AG04450 (cell line): ENCODE measurements at regions of chr18 and their contacts with region 1.

Region 1: GRCh38 chr18:25533218-25533617 is 181.3 kb upstream of the ZNF521 start:
- DNase-seq: no peak
- H3K4me3 ChIP-seq: no peak overlapping the region
- H3K27ac ChIP-seq: no peak overlapping the region
- H3K27me3 ChIP-seq: no peaks in the 10 kb centered on the region
- CTCF ChIP-seq: no peak

Region 2: GRCh38 chr18:25262920-25263319 is 270.3 kb before region 1 on chr18:
- CTCF ChIA-PET with region 1: interaction called, 12 read pairs
- POLR2A ChIA-PET with region 1: no interaction called
- DNase-seq: no peak
- H3K4me3 ChIP-seq: no peak overlapping the region
- H3K27ac ChIP-seq: no peak overlapping the region
- H3K27me3 ChIP-seq: no peaks in the 10 kb centered on the region
- CTCF ChIP-seq: no peak

Region 3: GRCh38 chr18:25435149-25435782 is 98.0 kb before region 1 on chr18:
- CTCF ChIA-PET with region 1: no interaction called
- POLR2A ChIA-PET with region 1: no interaction called
- DNase-seq: no peak
- H3K4me3 ChIP-seq: no peak overlapping the region
- H3K27ac ChIP-seq: no peak overlapping the region
- H3K27me3 ChIP-seq: no peaks in the 10 kb centered on the region
- CTCF ChIP-seq: no peak

Region 4: DNA sequence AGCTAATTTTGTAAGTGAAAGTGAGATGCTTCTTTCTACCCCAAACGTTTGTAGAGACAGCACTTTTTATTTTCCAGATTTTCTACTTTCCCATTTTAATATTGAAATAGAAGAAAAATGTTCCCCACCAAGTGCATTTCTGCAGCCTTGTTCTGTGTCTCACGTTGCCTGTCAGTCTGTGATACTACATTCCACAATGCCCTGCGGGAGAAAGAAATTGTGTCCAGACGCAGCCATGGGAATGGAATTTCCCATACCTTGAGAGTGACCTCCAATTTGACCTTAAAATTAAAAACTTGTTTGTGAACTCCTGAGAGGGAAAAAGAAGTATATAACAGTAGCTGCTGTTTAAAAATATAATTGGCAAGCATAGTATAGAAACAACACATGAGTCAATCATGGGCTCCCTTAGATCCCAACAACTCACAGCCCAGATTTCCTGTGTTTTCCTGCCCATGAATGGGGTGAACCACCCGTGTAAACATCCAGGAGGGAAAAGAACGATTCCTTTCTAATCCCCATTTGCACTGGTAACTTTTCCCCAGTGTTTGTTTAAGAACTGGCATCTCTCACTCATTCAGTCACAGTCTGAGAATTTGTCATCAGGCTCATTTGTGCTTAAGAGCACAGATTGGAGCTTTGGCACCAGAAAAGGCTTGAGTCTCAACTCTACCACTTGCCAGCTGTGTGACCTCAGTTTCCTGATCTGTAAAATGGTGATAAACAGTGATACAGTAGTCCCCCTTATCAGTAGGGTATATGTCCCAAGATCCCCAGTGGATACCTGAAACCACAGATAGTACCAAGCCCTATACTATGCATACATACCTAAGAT is 15.1 kb before region 1 on chr18:
- CTCF ChIA-PET with region 1: no interaction called
- POLR2A ChIA-PET with region 1: no interaction called
- DNase-seq: no peak
- H3K4me3 ChIP-seq: no peak overlapping the region
- H3K27ac ChIP-seq: no peak overlapping the region
- H3K27me3 ChIP-seq: peaks cover 3% of the 10 kb centered on the region
- CTCF ChIP-seq: no peak

Region 5: DNA sequence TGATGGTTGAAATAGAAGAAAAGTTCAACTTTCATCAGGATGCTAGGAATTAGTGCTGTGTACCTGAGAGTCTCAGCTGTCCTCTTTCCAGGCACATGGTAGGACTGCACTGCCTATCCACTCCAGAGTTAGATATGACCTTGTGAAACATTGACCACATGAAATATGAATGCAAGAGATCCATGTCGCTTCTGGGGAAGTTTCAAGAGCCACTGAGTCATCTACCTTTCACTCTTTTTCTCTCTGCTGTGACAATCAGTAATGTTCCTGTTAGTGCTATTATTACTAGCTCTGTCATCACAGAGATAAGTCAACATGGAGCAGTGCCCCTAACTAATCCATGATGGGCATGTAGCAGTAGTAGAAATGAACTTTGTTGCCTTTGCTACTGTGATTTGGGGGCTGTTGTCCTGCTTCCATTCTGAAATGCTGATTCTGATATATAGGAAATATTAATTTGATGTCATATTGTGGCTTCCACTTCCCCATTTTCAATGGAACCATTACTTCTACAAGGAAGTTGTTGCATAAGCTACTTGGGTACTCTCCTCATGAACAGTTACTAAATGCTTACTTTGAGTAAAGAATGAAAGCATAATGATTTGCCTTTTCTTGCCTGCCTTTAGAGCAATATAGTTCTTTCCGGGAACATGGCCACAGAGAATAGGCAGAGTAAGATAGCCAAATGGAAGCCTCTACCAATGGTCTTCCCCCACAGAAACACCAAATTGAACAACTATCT is 11.5 kb after region 1 on chr18:
- CTCF ChIA-PET with region 1: no interaction called
- POLR2A ChIA-PET with region 1: no interaction called
- DNase-seq: no peak
- H3K4me3 ChIP-seq: no peak overlapping the region
- H3K27ac ChIP-seq: no peak overlapping the region
- H3K27me3 ChIP-seq: no peaks in the 10 kb centered on the region
- CTCF ChIP-seq: no peak

Region 6: DNA sequence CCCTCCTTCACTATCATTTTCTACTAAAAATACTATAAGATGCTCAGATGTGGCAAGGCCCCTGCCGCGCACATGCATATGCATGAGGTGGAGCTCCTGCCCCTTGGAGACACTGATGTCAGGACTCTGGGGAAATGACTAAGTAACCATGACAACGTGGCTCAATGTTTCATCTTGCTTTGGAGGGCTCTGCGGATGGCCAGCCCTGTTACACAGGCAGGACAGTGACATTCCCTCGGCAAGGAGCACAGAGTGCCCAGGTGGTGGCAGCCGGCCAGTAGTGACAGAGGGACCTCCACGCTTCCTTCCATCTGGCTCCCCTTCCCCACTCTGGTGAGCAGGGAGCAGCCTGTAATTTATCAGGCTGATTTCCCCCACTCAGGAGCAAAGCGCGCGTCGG is 193.1 kb after region 1 on chr18:
- CTCF ChIA-PET with region 1: no interaction called
- POLR2A ChIA-PET with region 1: no interaction called
- DNase-seq: peak; percentile 8
- H3K4me3 ChIP-seq: no peak overlapping the region
- H3K27ac ChIP-seq: peak overlapping the region; percentile 21
- H3K27me3 ChIP-seq: peaks cover 3% of the 10 kb centered on the region
- CTCF ChIP-seq: peak; percentile 20; the same call in 1 of the 2 replicates